Heart right ventricle (tissue), 16 donors: ENCODE measurements at regions of chr2 and their contacts with region 1.

Region 1: GRCh38 chr2:30410217-30410616 is 36.8 kb upstream of the LCLAT1 start:
- DNase-seq: no peak
- ATAC-seq: no peak
- H3K4me3 ChIP-seq: no peak overlapping the region
- H3K27ac ChIP-seq: peak overlapping the region in 9 of 10 donors; percentile 69 to 92 (median 86)
- H3K4me1 ChIP-seq: peaks cover 30 to 85% (median 67%) of the 10 kb centered on the region in 9 donors
- H3K27me3 ChIP-seq: no peaks in the 10 kb centered on the region
- CTCF ChIP-seq: no peak

Region 2: DNA sequence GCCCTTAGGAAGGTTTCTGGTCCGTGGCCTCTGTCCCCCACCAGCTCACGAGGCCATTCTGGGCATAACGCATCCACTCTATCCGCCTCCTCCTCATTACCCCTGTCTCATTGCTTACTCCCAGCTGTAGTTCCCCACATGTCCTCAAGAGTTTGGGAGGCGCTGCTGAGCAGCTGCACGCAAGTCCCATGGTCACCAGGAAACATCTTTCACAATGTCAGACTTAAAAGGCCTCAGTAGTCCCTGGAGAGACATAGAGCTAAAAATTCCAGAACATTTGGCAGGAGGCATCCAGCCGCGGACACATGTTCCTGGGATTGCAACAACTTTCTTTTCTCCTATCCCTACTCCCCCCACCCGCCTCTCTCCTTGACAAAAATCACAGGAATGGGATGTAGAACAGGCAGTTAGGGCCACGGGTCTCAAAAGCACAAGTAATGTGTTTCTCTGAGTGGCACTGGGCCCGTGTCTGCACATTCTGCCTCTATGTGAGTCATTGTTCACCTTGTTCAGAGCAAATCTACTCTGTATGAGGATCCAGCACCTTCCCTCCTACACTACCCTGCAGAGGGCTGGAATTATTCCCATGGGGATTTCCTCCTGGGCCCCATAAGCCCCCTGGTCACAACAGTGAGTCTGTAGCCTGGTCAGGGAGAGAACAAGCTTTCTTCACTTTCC is 170.8 kb before region 1 on chr2:
- intact Hi-C with region 1: loop called in 5 of 10 experiments (anchors 5 kb)
- DNase-seq: peak; percentile 75 to 82
- ATAC-seq: peak; percentile 61 to 86 (median 78)
- H3K4me3 ChIP-seq: peak overlapping the region in 4 of 10 donors; percentile 1 to 25 (median 16)
- H3K27ac ChIP-seq: peak overlapping the region; percentile 41 to 98 (median 72)
- H3K4me1 ChIP-seq: peaks cover 31 to 100% (median 81%) of the 10 kb centered on the region in 9 donors
- H3K27me3 ChIP-seq: no peaks in the 10 kb centered on the region
- CTCF ChIP-seq: peak; percentile 93 to 99 (median 96)

Region 3: GRCh38 chr2:30362468-30363081 is 47.6 kb before region 1 on chr2:
- intact Hi-C with region 1: loop called in 5 of 10 experiments (anchors 5 kb)
- DNase-seq: no peak
- ATAC-seq: no peak
- H3K4me3 ChIP-seq: no peak overlapping the region
- H3K27ac ChIP-seq: peak overlapping the region; percentile 34 to 88 (median 78)
- H3K4me1 ChIP-seq: peaks cover 18 to 80% (median 59%) of the 10 kb centered on the region in 9 donors
- H3K27me3 ChIP-seq: no peaks in the 10 kb centered on the region
- CTCF ChIP-seq: no peak

Region 4: GRCh38 chr2:30385327-30385726 is 24.9 kb before region 1 on chr2:
- intact Hi-C with region 1: no loop called
- DNase-seq: no peak
- ATAC-seq: peak in 5 of 8 donors; percentile 55 to 74 (median 69)
- H3K4me3 ChIP-seq: no peak overlapping the region
- H3K27ac ChIP-seq: no peak overlapping the region
- H3K4me1 ChIP-seq: no peaks in the 10 kb centered on the region
- H3K27me3 ChIP-seq: no peaks in the 10 kb centered on the region
- CTCF ChIP-seq: no peak

Region 5: GRCh38 chr2:30436859-30437435 is 26.7 kb after region 1 on chr2:
- intact Hi-C with region 1: no loop called
- DNase-seq: peak in 1 of 2 donors; percentile 36
- ATAC-seq: peak in 7 of 8 donors; percentile 44 to 76 (median 68)
- H3K4me3 ChIP-seq: no peak overlapping the region
- H3K27ac ChIP-seq: peak overlapping the region; percentile 33 to 88 (median 78)
- H3K4me1 ChIP-seq: peaks cover 10 to 50% (median 32%) of the 10 kb centered on the region in 9 donors
- H3K27me3 ChIP-seq: no peaks in the 10 kb centered on the region
- CTCF ChIP-seq: no peak